IMR-90 (cell line): ENCODE measurements at regions of chr12 and their contacts with region 1.

Region 1: DNA sequence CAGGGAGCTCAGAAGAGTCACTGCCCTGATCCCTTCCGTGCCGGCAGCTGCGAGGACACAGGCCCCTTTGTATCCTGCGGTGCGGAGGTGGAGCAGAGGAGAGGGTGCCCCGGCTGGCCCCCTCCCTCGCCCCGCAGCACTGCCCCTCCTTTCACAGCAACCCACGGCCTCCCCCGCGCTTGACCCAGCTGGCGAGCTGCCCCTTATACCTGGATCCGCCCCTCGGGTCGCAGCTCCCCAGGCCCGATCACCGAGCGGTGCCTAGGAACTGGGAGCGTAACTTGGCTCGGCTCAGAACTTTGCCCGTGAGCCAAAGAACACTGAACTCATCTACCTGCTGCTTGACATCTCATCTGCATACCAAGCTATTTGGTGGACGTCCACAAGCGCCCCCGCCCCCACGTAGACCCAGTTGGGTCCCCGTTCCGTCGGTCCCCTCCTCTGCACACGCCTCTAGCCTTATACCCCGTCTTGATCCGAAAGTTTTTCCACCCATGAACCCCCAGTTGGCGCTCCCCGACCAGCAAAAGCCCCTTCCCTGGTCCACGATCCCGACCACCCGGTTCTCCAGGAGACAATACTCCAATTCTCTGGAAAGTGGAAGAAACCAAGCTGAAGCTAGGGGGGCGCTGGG is 697 bp upstream of the DNAJC14 start:
- DNase-seq: no peak
- ATAC-seq: peak; percentile 28
- H3K4me3 ChIP-seq: peak overlapping the region; percentile 78
- H3K27ac ChIP-seq: peak overlapping the region; percentile 66
- H3K4me1 ChIP-seq: peaks cover 14% of the 10 kb centered on the region; the same call in 1 of the 2 replicates
- H3K27me3 ChIP-seq: no peaks in the 10 kb centered on the region
- CTCF ChIP-seq: 0 out of 2 replicates have a peak, but pooled peaks have one; percentile 3
- POLR2A ChIP-seq: 0 out of 2 replicates have a peak, but pooled peaks have one; percentile 8
- RAD21 ChIP-seq: no peak

Region 2: DNA sequence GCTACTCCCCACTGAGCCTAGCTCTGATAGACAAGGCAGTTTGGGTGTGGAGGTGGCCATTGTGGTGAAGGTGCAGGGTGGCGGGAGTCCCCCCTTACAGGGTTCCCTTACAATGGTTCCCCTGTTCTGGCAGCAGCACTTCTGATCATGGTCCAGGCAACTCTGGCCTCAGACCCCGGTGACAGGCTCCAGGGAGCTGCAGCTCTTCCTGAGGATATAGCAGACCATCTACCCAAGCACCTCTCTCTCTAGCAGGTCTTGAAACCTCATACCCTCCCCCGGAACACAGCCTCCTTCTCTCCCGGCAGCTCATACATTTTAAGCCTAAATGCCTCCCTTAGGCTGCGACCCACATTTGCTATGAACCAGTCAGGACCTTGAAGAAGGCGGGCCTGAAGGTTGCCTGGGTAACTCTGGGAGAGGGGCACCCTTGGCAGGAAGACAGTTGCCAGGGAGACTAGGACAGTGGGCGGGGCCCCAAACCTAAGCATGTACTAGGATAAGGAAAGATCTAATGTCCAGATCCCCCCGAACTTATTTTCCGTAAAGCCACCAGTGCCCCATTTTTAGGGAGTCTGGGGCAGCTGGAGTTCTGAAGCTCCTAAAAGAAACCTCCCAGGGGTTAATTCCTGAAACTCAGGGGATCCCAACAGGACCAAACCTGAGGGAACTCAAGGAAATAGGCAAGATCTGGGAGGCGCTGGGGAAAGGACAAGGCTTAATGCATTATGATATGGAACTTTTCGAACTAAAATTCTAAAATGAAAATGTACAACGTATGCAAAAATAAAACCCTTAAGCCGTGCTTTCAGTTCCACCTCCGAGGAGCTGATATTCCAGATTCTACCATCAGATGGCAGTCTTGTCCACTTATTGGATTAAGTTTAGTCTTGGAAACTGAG is 91.7 kb before region 1 on chr12:
- CTCF ChIA-PET with region 1: no interaction called
- POLR2A ChIA-PET with region 1: no interaction called
- dilution Hi-C with region 1: no loop called
- in situ Hi-C with region 1: no loop called
- intact Hi-C with region 1: no loop called
- DNase-seq: peak; percentile 82
- ATAC-seq: peak; percentile 75
- H3K4me3 ChIP-seq: peak overlapping the region; percentile 68
- H3K27ac ChIP-seq: peak overlapping the region; percentile 47
- H3K4me1 ChIP-seq: peaks cover 6% of the 10 kb centered on the region
- H3K27me3 ChIP-seq: no peaks in the 10 kb centered on the region
- CTCF ChIP-seq: peak; percentile 93
- POLR2A ChIP-seq: no peak
- RAD21 ChIP-seq: peak; percentile 89

Region 3: GRCh38 chr12:55806982-55807381 is 23.1 kb before region 1 on chr12:
- CTCF ChIA-PET with region 1: no interaction called
- POLR2A ChIA-PET with region 1: no interaction called
- dilution Hi-C with region 1: no loop called
- in situ Hi-C with region 1: no loop called
- intact Hi-C with region 1: no loop called
- DNase-seq: no peak
- ATAC-seq: no peak
- H3K4me3 ChIP-seq: no peak overlapping the region
- H3K27ac ChIP-seq: no peak overlapping the region
- H3K4me1 ChIP-seq: no peaks in the 10 kb centered on the region; the same call in 1 of the 2 replicates
- H3K27me3 ChIP-seq: no peaks in the 10 kb centered on the region
- CTCF ChIP-seq: no peak
- POLR2A ChIP-seq: no peak
- RAD21 ChIP-seq: no peak

Region 4: GRCh38 chr12:55885113-55885512 is 55.0 kb after region 1 on chr12:
- CTCF ChIA-PET with region 1: no interaction called
- POLR2A ChIA-PET with region 1: interaction called, 10 read pairs
- dilution Hi-C with region 1: no loop called
- in situ Hi-C with region 1: no loop called
- intact Hi-C with region 1: no loop called
- DNase-seq: no peak
- ATAC-seq: no peak
- H3K4me3 ChIP-seq: no peak overlapping the region
- H3K27ac ChIP-seq: no peak overlapping the region
- H3K4me1 ChIP-seq: no peaks in the 10 kb centered on the region; the same call in 1 of the 2 replicates
- H3K27me3 ChIP-seq: no peaks in the 10 kb centered on the region
- CTCF ChIP-seq: no peak
- POLR2A ChIP-seq: no peak
- RAD21 ChIP-seq: no peak

Region 5: GRCh38 chr12:55926738-55927587 is 96.9 kb after region 1 on chr12:
- CTCF ChIA-PET with region 1: interaction called, 4 read pairs
- POLR2A ChIA-PET with region 1: interaction called, 3 read pairs
- dilution Hi-C with region 1: no loop called
- in situ Hi-C with region 1: loop called (anchors 10 kb)
- intact Hi-C with region 1: no loop called
- DNase-seq: peak; percentile 91
- ATAC-seq: peak; percentile 70
- H3K4me3 ChIP-seq: peak overlapping the region; percentile 83
- H3K27ac ChIP-seq: peak overlapping the region; percentile 94
- H3K4me1 ChIP-seq: peaks cover 13% of the 10 kb centered on the region
- H3K27me3 ChIP-seq: no peaks in the 10 kb centered on the region
- CTCF ChIP-seq: peak; percentile 64
- POLR2A ChIP-seq: peak; percentile 84
- RAD21 ChIP-seq: no peak; the same call in 1 of the 2 replicates